Right ventricle myocardium inferior (tissue), 1 donor: ENCODE measurements at regions of chr6 and their contacts with region 1.

Region 1: DNA sequence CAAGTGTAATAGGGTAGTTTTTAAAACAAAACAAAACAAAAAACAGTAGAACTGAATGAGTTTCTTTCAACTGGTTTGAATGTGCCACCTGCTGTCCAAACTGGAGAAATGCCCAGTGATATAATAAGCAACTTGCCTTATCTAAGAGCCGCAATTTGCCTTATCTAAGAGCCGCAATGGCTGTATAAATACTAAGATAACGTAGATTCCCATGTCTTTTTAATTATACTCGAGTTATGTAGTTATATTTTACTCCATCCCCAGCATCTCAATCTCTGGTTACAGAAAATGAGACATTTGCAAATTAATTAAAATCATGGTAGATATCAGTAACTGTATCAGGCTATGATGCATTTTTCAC is 67.2 kb downstream of the RPP40 start:
- DNase-seq: no peak
- ATAC-seq: no peak

Region 2: GRCh38 chr6:4313044-4313686 is 623.5 kb before region 1 on chr6:
- intact Hi-C with region 1: loop called (anchors 5 kb)
- DNase-seq: no peak
- ATAC-seq: peak; percentile 59

Region 3: GRCh38 chr6:4460586-4461475 is 475.8 kb before region 1 on chr6:
- intact Hi-C with region 1: loop called (anchors 10 kb)
- DNase-seq: peak; percentile 89
- ATAC-seq: peak; percentile 94

Region 4: DNA sequence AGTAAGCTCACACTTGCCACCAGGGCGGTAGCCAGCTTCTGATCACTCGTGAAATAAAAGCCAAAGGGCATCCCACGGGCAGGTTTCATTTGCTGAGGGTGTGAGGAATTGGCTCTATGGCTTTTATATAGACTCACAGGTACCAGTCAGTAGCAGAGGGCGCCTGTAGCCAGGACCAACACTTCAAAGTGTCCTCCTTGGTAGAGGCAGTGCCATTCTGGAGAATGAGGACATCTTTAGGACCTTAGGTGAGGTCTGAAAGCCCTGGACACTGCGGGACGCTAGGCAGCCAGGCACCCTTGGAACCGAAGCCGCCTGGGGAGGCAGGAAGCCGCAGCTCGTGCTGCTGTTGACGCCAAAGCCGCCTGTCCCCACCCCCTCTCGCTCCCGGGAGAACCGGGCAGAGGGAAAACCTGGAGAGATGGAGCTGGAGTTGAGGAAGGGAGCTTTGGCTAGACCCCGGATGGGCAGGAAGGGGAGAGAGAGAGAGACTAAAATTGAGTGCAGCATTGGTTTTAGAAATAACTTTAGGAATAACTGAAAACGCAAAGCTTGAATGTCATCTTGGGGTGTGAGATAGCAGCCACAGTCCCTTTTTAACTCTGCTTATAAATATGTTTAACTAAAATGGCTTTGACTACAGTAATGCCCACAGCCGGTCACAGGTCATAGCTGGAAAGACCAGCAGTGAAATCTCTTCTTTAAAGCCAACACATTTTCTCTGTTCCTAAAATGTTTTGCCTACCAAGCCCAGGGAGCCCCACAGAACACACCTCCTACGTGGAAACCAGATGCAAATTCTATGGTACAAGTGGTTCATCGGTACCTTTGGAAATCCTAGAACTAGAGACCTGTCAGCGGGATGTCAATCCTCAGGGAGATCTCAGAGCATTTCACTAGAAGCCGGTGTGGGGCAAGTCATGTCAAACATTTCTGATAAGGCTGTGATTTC is 289.0 kb before region 1 on chr6:
- intact Hi-C with region 1: loop called (anchors 10 kb)
- DNase-seq: peak; percentile 84
- ATAC-seq: peak; percentile 95

Region 5: DNA sequence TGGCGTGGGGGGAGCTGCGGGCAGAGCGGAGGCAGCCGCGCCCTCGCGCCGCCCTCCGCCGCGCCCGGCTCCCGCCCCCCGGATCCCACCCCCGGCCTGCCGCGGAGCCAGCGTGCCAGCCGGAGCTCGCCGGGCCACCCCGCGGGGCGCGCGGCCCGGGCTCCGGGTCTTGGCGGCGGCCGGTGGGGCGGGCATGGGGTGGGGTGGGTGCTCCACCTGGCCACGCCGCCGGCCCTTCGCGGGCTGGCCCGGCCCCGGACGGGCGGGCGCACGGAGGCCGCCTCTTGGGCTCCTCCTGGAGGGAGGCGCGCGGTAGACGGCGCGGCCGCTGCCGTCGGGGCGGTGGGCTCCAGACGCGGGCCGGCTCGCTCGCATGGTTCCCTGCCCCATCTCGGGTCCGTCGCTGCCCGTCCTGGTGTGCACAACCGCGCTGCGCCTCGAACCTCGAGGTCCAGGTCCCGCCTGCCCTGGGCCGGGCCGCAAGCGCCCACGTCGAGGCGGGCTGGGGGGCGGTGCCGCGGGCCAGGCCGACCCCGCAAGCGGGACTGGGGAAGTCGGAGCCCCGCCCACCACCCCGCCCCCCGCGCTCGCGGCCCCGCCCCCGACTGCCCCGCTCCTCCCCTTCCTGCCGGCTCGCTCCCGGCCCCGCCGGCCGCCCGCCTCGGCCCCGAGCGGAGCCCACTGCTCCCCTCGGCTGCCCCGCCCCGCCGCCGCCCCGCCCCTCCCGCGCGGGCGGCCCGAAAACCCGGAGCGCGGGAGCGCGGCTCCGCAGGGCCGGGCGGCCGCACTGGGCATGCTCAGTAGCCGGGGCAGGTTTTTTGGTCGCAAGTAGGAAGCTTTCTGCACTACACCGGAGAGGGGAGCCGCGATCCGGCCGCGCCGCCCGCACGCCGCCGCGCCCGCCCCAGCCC is 160.8 kb before region 1 on chr6 and contains the start of gene CDYL:
- intact Hi-C with region 1: loop called (anchors 5 kb)
- DNase-seq: peak; percentile 93
- ATAC-seq: peak; percentile 93
- total RNA-seq, gene CDYL: 32.1 TPM